Activated T-helper 1 cell treated with anti-CD3 and anti-CD28 coated beads, Interleukin-12 subunit alpha, Interleukin-12 subunit beta, Interleukin-2, Interleukin-4 antibody, amounts not matched to agents 30 ng/mL and 10 ng/mL and 1 ng/mL, durations not matched to agents 14 hours and 24 hours and 36 hours (primary cell): ENCODE measurements at regions of chr9 and their contacts with region 1.

Region 1: GRCh38 chr9:35903049-35903448 is 3.0 kb upstream of the HRCT1 start:
- DNase-seq: peak; percentile 22
- H3K4me3 Mint-ChIP-seq: no peak overlapping the region
- H3K27ac Mint-ChIP-seq: no peak overlapping the region
- H3K4me1 Mint-ChIP-seq: peaks cover 5% of the 10 kb centered on the region
- H3K27me3 Mint-ChIP-seq: peaks cover 10% of the 10 kb centered on the region

Region 2: GRCh38 chr9:35945341-35946018 is 42.4 kb after region 1 on chr9:
- intact Hi-C with region 1: loop called (anchors 1 kb)
- DNase-seq: peak; percentile 27
- H3K4me3 Mint-ChIP-seq: no peak overlapping the region
- H3K27ac Mint-ChIP-seq: no peak overlapping the region
- H3K4me1 Mint-ChIP-seq: peaks cover 11% of the 10 kb centered on the region
- H3K27me3 Mint-ChIP-seq: peaks cover 8% of the 10 kb centered on the region